Body of pancreas (tissue), 4 donors: ENCODE measurements at regions of chr10 and their contacts with region 1.

Region 1: GRCh38 chr10:15433850-15434537 is 62.9 kb upstream of the FAM171A1 start:
- DNase-seq: peak in 3 of 4 donors; percentile 29 to 44 (median 40)
- ATAC-seq: peak; percentile 64
- H3K4me3 ChIP-seq: no peak overlapping the region
- H3K27ac ChIP-seq: no peak overlapping the region
- H3K4me1 ChIP-seq: no peaks in the 10 kb centered on the region
- H3K27me3 ChIP-seq: no peaks in the 10 kb centered on the region
- CTCF ChIP-seq: peak; percentile 36 to 94 (median 62)
- POLR2A ChIP-seq: no peak

Region 2: DNA sequence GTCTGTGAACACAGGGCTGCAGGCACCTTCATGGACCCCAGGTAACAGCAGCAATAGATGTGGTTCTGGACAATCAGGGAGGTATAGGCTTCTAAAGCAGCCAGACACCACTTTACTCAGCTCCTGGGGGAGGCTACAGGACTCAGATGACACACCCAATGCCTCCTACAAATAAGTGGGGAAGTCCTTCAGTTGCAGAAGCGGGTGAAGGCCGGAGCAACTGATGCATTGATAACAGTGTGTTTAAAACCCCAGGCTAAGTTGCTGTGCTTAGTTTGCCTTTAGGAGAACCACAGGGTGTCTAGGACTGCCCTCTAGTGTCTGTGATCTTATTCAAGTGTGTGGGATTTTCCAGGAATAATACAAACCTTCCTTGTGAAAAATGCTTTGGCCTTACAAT is 291.6 kb after region 1 on chr10:
- intact Hi-C with region 1: loop called (anchors 10 kb)
- DNase-seq: peak in 1 of 4 donors; percentile 18
- ATAC-seq: no peak
- H3K4me3 ChIP-seq: no peak overlapping the region
- H3K27ac ChIP-seq: no peak overlapping the region
- H3K4me1 ChIP-seq: no peaks in the 10 kb centered on the region
- H3K27me3 ChIP-seq: no peaks in the 10 kb centered on the region
- CTCF ChIP-seq: peak in 6 of 7 experiments; percentile 22 to 54 (median 38)
- POLR2A ChIP-seq: no peak